Calu3 (cell line): ENCODE measurements at regions of chr20 and their contacts with region 1.

Region 1: GRCh38 chr20:31485450-31486339 is 10.6 kb downstream of the REM1 start:
- DNase-seq: no peak
- H3K4me3 Mint-ChIP-seq: no peak overlapping the region
- H3K27ac Mint-ChIP-seq: no peak overlapping the region
- H3K4me1 Mint-ChIP-seq: peaks cover 12% of the 10 kb centered on the region
- H3K27me3 Mint-ChIP-seq: peaks cover 25% of the 10 kb centered on the region
- CTCF ChIP-seq: no peak

Region 2: GRCh38 chr20:31274441-31274840 is 211.3 kb before region 1 on chr20:
- CTCF ChIA-PET with region 1: no interaction called
- intact Hi-C with region 1: no loop called
- DNase-seq: no peak
- H3K4me3 Mint-ChIP-seq: no peak overlapping the region
- H3K27ac Mint-ChIP-seq: no peak overlapping the region
- H3K4me1 Mint-ChIP-seq: no peaks in the 10 kb centered on the region
- H3K27me3 Mint-ChIP-seq: no peaks in the 10 kb centered on the region
- CTCF ChIP-seq: no peak

Region 3: GRCh38 chr20:31496761-31497295 is 11.1 kb after region 1 on chr20:
- CTCF ChIA-PET with region 1: interaction called, 28 read pairs
- intact Hi-C with region 1: no loop called
- DNase-seq: peak; percentile 44
- H3K4me3 Mint-ChIP-seq: no peak overlapping the region
- H3K27ac Mint-ChIP-seq: no peak overlapping the region
- H3K4me1 Mint-ChIP-seq: peaks cover 8% of the 10 kb centered on the region
- H3K27me3 Mint-ChIP-seq: peaks cover 74% of the 10 kb centered on the region
- CTCF ChIP-seq: no peak

Region 4: GRCh38 chr20:31514159-31515071 is 28.7 kb after region 1 on chr20 and contains the start of gene HM13:
- CTCF ChIA-PET with region 1: interaction called, 10 read pairs
- intact Hi-C with region 1: no loop called
- DNase-seq: peak; percentile 95
- H3K4me3 Mint-ChIP-seq: no peak within 1 kb of the TSS
- H3K27ac Mint-ChIP-seq: no peak within 1 kb of the TSS
- H3K4me1 Mint-ChIP-seq: no peaks in the 10 kb centered on the region
- H3K27me3 Mint-ChIP-seq: no peaks in the 10 kb centered on the region
- CTCF ChIP-seq: peak; percentile 99
- total RNA-seq, gene HM13: 342 and 378 TPM in 2 replicates